OCI-LY7 (cell line): ENCODE measurements at regions of chr5 and their contacts with region 1.

Region 1: GRCh38 chr5:132064738-132065331 is 4.4 kb downstream of the IL3 start:
- DNase-seq: peak; percentile 80
- H3K4me3 ChIP-seq: no peak overlapping the region
- H3K27ac ChIP-seq: no peak overlapping the region
- H3K4me1 ChIP-seq: no peaks in the 10 kb centered on the region
- CTCF ChIP-seq: peak; percentile 87

Region 2: GRCh38 chr5:131810510-131811249 is 254.2 kb before region 1 on chr5:
- CTCF ChIA-PET with region 1: no interaction called
- POLR2A ChIA-PET with region 1: no interaction called
- intact Hi-C with region 1: loop called (anchors 1 kb)
- DNase-seq: peak; percentile 13
- H3K4me3 ChIP-seq: no peak overlapping the region
- H3K27ac ChIP-seq: no peak overlapping the region
- H3K4me1 ChIP-seq: no peaks in the 10 kb centered on the region
- CTCF ChIP-seq: peak; percentile 57

Region 3: GRCh38 chr5:131932235-131932634 is 132.6 kb before region 1 on chr5:
- CTCF ChIA-PET with region 1: no interaction called
- POLR2A ChIA-PET with region 1: no interaction called
- intact Hi-C with region 1: no loop called
- DNase-seq: no peak
- H3K4me3 ChIP-seq: no peak overlapping the region
- H3K27ac ChIP-seq: no peak overlapping the region
- H3K4me1 ChIP-seq: no peaks in the 10 kb centered on the region
- CTCF ChIP-seq: no peak

Region 4: DNA sequence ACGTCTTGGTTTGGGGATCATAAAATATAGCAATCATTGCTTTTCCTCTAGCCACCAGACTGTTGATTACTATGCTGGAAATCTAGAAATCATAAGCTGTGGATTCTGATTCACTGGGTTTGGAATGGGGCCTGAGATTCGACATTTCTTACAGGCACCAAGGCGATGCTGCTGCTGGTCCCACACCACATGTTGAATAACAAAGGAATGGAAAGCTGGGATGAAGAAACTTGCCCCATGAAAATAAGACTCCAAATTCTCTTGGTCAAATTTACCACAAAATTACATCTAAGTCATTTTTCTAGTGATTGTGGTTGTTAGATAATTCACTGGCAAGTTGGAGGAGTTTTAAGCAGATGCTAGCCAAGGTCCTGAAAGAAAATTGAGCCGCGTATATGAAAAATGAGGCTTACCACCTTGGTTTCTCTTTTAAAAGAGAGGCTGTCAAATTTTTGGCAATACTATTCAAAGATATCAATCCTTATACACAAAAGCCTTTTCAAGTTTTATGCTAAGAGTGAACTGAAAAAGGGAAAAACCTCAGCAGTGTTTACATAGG is 96.4 kb before region 1 on chr5:
- CTCF ChIA-PET with region 1: no interaction called
- POLR2A ChIA-PET with region 1: no interaction called
- intact Hi-C with region 1: no loop called
- DNase-seq: no peak
- H3K4me3 ChIP-seq: no peak overlapping the region
- H3K27ac ChIP-seq: no peak overlapping the region
- H3K4me1 ChIP-seq: no peaks in the 10 kb centered on the region
- CTCF ChIP-seq: no peak

Region 5: DNA sequence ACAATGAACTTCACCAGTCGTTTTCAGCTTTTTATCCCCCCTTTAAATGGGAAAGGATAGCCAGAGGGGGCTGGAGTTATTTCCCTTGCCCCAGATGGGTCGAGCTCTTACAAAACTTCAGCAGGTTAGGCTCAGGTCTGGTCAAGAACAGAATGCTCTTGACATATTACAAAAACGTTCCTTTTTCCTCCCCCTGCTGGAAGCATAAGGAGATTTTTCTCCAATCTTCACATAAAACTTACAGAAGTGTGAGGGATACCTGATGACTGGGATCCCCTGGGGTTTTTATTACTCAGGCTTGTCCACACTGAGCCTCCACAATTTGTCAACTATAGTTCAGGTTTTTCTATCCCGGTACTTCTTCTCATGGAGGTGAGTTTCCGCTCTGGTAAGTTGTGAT is 69.5 kb after region 1 on chr5:
- CTCF ChIA-PET with region 1: no interaction called
- POLR2A ChIA-PET with region 1: no interaction called
- intact Hi-C with region 1: loop called (anchors 2 kb)
- DNase-seq: no peak
- H3K4me3 ChIP-seq: no peak overlapping the region
- H3K27ac ChIP-seq: no peak overlapping the region
- H3K4me1 ChIP-seq: no peaks in the 10 kb centered on the region
- CTCF ChIP-seq: peak; percentile 64

Region 6: DNA sequence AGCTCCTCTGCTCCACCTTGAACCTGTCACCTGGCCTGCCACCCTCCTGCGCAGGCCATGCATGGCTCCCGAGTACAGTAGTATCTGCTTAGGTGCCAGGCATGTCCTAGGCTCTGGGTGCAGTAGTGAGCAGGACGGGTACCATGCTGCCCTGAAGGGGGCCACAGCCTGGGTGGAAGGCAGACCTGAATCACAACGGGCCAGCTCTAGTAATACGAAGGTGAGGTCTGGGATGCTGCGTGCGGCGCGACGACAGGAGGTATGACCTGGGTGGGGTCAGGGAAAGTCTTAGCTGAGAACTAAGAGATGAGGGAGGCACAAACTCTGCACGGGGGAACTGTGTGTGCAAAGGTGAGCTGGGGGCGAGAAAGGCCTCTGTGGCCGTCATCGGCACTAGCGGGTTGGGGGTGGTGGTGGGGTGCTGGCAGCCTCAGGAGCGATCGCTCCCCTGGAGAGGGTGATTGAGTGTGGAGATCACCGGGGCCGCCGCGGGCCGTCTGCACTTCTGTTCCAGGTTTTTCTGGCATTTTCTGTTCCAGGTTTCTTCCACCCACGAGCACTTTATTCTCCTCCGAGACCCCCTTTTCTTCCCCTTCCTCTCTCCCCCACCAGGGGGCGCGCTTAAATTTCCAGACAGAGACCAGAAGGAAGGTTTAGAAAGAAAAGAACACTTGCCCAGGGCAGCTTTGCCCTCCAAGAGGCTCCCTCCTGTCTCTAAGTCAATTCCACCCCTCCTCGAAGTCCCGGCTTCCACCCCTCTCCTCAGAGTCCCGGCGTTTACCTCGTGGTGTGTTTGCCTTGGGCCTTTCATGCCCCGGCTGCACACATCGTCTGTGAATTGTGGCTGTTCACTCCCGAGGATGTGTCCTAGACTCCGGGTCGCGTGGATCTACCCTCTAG is 207.7 kb after region 1 on chr5:
- CTCF ChIA-PET with region 1: no interaction called
- POLR2A ChIA-PET with region 1: no interaction called
- intact Hi-C with region 1: loop called (anchors 2 kb)
- DNase-seq: peak; percentile 57
- H3K4me3 ChIP-seq: no peak overlapping the region
- H3K27ac ChIP-seq: no peak overlapping the region
- H3K4me1 ChIP-seq: no peaks in the 10 kb centered on the region
- CTCF ChIP-seq: peak; percentile 92